GM10248 (cell line): ENCODE measurements at regions of chrX and their contacts with region 1.

Region 1: GRCh38 chrX:121308276-121308805 is 260.9 kb downstream of the GLUD2 start:
- DNase-seq: peak; percentile 32
- CTCF ChIP-seq: peak; percentile 22

Region 2: DNA sequence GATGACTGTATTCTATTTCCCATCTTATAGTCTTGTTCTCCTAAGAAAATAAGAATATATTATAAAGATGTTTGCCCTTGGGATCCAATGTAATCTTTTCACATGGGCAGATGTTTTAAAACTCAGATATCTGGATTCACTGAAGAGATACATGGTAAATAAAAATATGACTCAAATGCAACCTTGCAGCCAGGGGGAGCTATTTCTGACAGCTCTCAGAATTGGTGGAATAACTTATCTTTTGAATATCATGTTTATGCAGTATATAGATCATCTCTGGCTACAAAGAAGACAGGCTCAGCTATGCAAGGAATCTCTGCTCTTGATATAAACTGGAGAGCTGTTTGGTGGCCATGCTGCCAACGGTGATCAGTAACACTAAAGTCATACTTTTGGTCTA is 13.8 kb after region 1 on chrX:
- CTCF ChIA-PET with region 1: interaction called, 12 read pairs
- POLR2A ChIA-PET with region 1: no interaction called
- DNase-seq: no peak
- CTCF ChIP-seq: no peak

Region 3: DNA sequence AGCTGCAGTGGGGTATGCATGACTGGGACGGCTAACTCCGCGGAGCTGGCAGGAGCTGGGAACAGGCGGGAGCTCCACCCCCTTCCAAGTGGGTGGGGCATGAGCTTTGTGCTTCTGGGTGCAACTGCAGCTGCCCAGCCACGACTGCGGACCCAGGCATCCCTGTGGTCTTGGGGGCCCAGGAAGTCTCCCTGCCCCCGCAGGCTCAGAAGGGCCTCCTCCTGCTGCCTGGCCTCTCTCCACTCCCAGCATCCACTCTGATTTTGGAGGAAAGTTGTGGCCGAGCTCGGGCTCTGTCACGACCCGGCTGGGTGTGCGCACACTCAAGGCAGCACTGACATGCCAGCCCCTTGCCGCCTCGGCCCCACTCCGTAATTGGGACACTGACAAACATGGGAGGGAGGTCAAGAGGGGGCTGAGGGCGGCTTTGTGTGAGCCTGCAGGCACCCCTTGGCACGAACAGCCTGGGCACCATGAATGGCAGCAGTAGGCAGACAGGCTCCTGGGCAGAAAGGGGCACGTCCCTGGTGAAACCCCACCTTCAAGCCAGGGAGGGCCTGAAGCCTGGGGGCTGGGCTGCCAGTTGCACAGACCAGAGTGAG is 561.6 kb after region 1 on chrX:
- CTCF ChIA-PET with region 1: no interaction called
- POLR2A ChIA-PET with region 1: no interaction called
- DNase-seq: no peak
- CTCF ChIP-seq: no peak